ENCODE measurements at regions of chr17 and their contacts with region 1.

Region 1: DNA sequence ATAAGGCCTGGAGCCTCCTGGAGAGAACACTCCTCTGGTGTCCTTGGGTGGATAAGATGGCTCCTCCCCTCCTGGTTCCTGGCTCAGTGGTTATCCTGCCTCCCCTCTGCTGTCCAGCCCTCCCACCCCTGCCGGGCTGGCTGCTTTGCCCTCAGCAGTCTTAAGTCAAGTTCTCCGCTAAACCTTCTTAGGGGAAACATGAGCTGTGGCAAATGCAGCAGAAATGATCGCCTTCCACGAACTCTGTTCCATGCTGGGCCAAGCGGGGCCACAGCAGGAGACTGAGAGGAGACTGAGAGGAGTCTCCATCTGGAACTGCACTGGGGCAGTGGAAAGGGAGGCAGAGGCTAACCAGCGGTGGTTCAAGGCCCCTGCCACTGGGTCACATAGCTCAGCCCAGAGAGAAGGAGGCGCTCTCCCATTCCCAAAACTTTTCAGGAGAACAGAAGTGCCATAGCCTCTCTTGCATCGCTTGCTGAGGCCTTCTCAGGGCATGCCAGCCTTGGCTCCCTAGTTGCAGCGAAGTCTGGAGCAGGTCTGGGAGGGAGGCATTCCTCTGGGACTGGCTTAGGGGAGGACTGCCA is 26.9 kb downstream of the TNS4 start:
- DNase-seq: no peak
- H3K4me3 ChIP-seq: no peak overlapping the region
- H3K27ac ChIP-seq: no peak overlapping the region
- H3K4me1 ChIP-seq: peaks cover 12 to 15% of the 10 kb centered on the region in 2 experiments; a peak in 3 of 4 replicates
- H3K27me3 ChIP-seq: no peaks in the 10 kb centered on the region
- CTCF ChIP-seq: no peak
- EP300 ChIP-seq: no peak
- RAD21 ChIP-seq: no peak

Region 2: DNA sequence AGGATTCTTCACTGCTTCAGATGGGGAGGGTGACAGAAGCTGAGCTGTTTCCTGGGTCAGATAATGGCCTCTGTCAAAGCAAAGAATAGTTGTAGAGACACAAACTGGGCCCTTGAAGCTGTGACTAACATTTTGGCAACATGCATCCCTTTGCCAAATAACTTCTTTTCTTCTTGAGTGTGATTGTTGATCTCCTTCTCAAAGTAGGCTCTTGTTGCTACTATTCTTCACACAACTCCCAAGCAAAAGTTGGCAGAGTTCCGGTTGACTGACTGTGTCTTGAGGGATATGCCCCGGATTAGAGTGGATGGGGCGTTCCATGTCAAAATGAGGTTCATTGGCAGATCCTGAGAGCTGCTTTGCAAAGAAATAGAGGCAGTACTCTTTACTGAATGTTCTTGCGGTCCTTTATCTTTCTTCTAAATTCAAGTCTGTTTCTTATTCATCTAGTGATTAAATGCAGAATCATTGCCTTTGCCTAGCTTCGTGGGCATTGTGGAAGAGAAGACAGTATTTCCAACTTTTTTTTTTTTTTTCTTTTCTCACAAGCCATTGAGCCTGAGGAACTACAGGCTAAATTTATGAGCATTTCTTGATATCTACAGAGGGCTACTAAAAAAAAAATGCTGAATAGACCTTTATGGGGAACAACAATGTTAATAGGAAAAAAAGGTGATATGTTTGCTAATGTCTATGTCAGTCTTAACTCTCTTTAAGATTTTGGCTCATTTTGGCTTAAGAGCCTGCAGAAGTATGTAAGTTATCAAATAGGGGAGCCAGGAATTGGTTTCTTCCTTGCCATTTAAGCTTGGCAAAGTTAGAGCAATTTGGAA is 249.6 kb before region 1 on chr17:
- CTCF ChIA-PET with region 1: no interaction called
- POLR2A ChIA-PET with region 1: no interaction called
- DNase-seq: no peak
- H3K4me3 ChIP-seq: no peak overlapping the region
- H3K27ac ChIP-seq: 0 out of 4 replicates have a peak overlapping the region, but pooled peaks of 1 of the 2 experiments have one; percentile 1
- H3K4me1 ChIP-seq: no peaks in the 10 kb centered on the region; a peak in 1 of 4 replicates
- H3K27me3 ChIP-seq: no peaks in the 10 kb centered on the region
- CTCF ChIP-seq: no peak
- EP300 ChIP-seq: no peak
- RAD21 ChIP-seq: no peak

Region 3: DNA sequence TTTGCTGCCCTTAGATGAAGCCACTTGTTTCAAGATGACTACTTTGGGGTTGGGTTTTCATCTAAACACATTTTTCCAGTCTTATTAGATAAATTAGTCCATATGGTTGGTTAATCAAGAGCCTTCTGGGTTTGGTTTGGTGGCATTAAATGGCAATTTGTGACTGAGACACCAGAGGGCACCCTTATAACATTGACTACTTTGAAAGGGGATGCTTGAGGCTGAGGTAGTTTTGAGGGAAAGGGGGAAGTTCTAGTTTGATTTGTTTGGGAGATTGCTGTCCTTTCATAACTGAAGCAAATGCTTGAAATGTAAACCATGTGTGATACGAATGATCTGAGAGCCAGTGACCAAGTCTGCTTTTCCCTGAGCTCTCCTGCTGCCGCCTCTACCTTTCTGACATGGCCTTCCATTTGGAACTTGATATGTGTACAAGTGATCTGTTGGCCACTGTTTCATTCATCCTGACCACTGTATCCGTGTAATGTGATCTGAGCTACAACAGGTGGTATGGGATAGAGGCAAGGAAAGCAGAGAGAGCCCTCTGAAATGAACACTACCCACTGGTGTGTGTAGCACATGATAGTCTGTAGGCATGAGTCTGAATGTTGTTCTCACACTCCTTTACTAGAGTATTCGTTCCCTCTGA is 171.4 kb before region 1 on chr17:
- CTCF ChIA-PET with region 1: interaction called, 23 read pairs
- POLR2A ChIA-PET with region 1: no interaction called
- DNase-seq: peak; percentile 63
- H3K4me3 ChIP-seq: no peak overlapping the region; a peak in 1 of 4 replicates
- H3K27ac ChIP-seq: peak overlapping the region; percentile 82 to 99
- H3K4me1 ChIP-seq: peaks cover 48 to 53% of the 10 kb centered on the region in 2 experiments
- H3K27me3 ChIP-seq: no peaks in the 10 kb centered on the region
- CTCF ChIP-seq: peak; percentile 86
- EP300 ChIP-seq: 0 out of 4 replicates have a peak, but pooled peaks of 1 of the 2 experiments have one; percentile 45
- RAD21 ChIP-seq: peak; percentile 96

Region 4: DNA sequence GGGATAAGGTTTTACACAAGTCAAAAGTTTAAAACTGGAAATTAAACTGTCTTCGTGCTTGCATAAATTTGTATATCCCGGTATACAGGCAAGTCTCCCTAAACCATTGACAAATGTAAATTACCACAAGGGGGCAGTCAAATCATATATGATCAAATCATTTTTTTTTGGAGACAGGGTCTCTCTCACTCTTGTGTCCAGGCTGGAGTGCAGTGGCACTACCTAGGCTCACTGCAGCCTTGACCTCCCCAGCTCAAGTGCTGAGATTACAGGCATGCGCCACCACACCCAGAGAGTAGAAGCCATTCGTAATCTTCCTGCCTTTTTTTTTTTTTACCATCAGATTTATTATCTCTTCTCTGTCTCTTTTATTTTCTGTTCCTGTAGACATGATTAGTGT is 75.3 kb before region 1 on chr17:
- CTCF ChIA-PET with region 1: interaction called, 24 read pairs
- POLR2A ChIA-PET with region 1: no interaction called
- DNase-seq: peak; percentile 48
- H3K4me3 ChIP-seq: no peak overlapping the region
- H3K27ac ChIP-seq: peak overlapping the region in 1 of 2 experiments; percentile 19; a peak in 1 of 4 replicates
- H3K4me1 ChIP-seq: no peaks in the 10 kb centered on the region; a peak in 1 of 4 replicates
- H3K27me3 ChIP-seq: no peaks in the 10 kb centered on the region
- CTCF ChIP-seq: peak; percentile 64
- EP300 ChIP-seq: no peak
- RAD21 ChIP-seq: peak; percentile 69

Region 5: GRCh38 chr17:40433551-40434415 is 40.7 kb before region 1 on chr17:
- CTCF ChIA-PET with region 1: interaction called, 253 read pairs
- POLR2A ChIA-PET with region 1: no interaction called
- DNase-seq: peak; percentile 58
- H3K4me3 ChIP-seq: no peak overlapping the region
- H3K27ac ChIP-seq: peak overlapping the region; percentile 48 to 99
- H3K4me1 ChIP-seq: peaks cover 9 to 34% of the 10 kb centered on the region in 2 experiments; a peak in 3 of 4 replicates
- H3K27me3 ChIP-seq: no peaks in the 10 kb centered on the region
- CTCF ChIP-seq: peak; percentile 59
- EP300 ChIP-seq: peak in 1 of 2 experiments; percentile 57; a peak in 2 of 4 replicates
- RAD21 ChIP-seq: peak; percentile 52

Region 6: GRCh38 chr17:40464392-40464855 is 10.1 kb before region 1 on chr17:
- CTCF ChIA-PET with region 1: interaction called, 123 read pairs
- POLR2A ChIA-PET with region 1: interaction called, 5 read pairs
- DNase-seq: no peak
- H3K4me3 ChIP-seq: no peak overlapping the region
- H3K27ac ChIP-seq: no peak overlapping the region
- H3K4me1 ChIP-seq: peaks cover 12 to 40% of the 10 kb centered on the region in 2 experiments
- H3K27me3 ChIP-seq: no peaks in the 10 kb centered on the region
- CTCF ChIP-seq: no peak
- EP300 ChIP-seq: no peak
- RAD21 ChIP-seq: no peak

Region 7: GRCh38 chr17:40531051-40531991 is 56.8 kb after region 1 on chr17:
- CTCF ChIA-PET with region 1: interaction called, 116 read pairs
- POLR2A ChIA-PET with region 1: no interaction called
- DNase-seq: no peak
- H3K4me3 ChIP-seq: no peak overlapping the region
- H3K27ac ChIP-seq: no peak overlapping the region
- H3K4me1 ChIP-seq: peaks cover 0 to 7% of the 10 kb centered on the region in 2 experiments; a peak in 1 of 4 replicates
- H3K27me3 ChIP-seq: no peaks in the 10 kb centered on the region
- CTCF ChIP-seq: no peak
- EP300 ChIP-seq: no peak
- RAD21 ChIP-seq: no peak

Measured in SK-N-SH (cell line).